Posterior cingulate gyrus (tissue), 11 donors: ENCODE measurements at regions of chr2 and their contacts with region 1.

Region 1: DNA sequence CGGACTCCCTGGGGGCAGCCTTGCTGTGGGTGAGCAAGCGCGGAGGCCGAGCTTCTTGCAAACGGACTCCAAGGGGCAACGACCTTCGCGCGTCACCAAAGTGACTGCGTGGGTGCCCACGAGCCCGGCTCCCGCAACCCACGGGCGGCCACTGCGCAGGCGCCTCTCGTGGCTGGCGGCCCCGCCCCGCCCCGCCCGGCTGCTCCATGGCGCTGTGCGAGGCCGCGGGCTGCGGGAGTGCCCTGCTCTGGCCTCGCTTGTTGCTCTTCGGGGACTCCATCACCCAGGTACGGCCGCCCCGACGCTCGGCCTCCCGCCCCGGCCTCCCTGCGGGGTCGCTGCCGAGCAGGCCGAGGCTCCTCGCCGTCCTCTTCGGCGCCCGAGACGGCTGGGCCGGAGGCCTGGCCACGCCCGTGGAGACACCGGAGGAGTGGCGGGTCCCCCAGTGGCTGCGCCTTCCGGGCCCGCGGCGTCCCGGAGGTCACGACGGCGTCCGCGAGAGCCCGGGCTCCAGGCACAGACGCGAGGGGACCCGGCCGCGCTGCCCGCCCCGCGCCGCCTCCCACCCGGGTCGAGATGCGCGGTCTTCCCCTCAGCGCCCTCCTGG is at the start of gene IAH1:
- DNase-seq: peak; percentile 53 to 96 (median 72)

Region 2: DNA sequence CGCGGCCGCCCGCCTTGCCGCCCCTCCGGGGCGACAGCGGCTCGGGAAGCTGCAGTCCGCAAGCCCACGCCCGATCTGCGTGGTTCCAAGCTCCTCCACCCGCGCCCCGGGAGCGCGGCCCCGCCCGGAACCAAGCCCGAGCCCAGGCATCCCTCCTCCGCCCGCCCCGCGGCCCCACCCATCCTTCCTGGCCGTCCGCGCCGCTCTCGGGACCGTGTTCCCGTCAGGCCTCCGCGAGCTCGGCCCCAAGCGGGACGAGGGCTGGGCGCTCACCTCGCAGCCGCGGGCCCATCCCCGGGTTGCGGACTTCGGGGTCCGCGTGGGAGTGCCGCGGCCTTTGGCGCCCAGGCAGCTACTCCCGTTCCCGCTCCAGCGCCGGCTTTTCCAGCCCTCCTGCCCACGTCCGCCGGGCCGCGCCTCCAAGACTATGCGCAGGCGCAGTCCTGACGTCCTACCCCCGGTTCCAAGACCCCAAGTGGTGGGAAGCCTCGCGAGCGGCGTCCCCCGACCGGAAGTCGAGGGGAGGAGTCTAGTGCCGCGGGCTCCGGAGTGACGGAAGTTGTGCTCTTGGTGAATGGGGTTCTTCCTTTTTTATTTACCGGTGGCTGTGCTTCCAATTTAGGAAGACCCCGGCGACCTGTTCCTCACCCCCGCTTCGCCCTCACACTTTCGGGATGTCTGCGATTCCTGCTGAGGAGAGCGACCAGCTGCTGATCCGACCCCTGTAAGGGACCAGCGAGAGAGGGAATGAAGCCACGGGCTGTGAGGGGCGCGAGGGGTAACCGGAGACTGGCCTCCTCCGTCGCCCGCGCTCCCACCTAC is 51.2 kb before region 1 on chr2 and contains the starts of genes CPSF3 and ITGB1BP1:
- intact Hi-C with region 1: loop called (anchors 1 kb)
- DNase-seq: peak; percentile 95 to 100 (median 96)